Left cardiac atrium (tissue), 4 donors: ENCODE measurements at regions of chr11 and their contacts with region 1.

Region 1: GRCh38 chr11:75582895-75583717 is 21.1 kb downstream of the SERPINH1 start:
- DNase-seq: peak; percentile 80
- ATAC-seq: peak; percentile 74 to 81

Region 2: DNA sequence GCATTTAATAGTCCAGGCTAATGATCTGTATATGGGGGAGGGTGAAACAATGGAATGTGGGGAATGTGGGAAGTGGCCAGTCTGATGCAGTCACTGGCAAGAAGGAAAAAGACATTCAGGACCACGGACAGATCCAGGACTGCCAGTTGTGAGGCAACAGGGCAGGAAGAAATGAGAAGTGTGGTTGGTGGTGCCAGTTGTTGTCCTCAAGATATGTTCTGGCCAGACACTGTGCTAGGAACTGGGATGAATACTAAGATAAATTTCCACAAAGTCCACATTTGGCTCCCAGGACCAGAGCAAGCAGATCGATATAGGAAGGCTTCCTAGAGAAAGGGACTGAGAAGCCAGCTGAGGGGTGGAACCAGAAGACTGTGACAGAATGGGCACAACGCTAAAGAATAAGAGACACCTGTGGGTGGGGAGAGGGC is 349.3 kb before region 1 on chr11:
- intact Hi-C with region 1: no loop called
- DNase-seq: no peak
- ATAC-seq: peak in 1 of 2 donors; percentile 53

Region 3: GRCh38 chr11:75562048-75562835 is 20.9 kb before region 1 on chr11 and contains the start of gene SERPINH1:
- intact Hi-C with region 1: loop called in 1 of 2 experiments (anchors 1 kb)
- DNase-seq: peak; percentile 91
- ATAC-seq: peak; percentile 76 to 79
- total RNA-seq, gene SERPINH1: 105 to 137 TPM

Region 4: DNA sequence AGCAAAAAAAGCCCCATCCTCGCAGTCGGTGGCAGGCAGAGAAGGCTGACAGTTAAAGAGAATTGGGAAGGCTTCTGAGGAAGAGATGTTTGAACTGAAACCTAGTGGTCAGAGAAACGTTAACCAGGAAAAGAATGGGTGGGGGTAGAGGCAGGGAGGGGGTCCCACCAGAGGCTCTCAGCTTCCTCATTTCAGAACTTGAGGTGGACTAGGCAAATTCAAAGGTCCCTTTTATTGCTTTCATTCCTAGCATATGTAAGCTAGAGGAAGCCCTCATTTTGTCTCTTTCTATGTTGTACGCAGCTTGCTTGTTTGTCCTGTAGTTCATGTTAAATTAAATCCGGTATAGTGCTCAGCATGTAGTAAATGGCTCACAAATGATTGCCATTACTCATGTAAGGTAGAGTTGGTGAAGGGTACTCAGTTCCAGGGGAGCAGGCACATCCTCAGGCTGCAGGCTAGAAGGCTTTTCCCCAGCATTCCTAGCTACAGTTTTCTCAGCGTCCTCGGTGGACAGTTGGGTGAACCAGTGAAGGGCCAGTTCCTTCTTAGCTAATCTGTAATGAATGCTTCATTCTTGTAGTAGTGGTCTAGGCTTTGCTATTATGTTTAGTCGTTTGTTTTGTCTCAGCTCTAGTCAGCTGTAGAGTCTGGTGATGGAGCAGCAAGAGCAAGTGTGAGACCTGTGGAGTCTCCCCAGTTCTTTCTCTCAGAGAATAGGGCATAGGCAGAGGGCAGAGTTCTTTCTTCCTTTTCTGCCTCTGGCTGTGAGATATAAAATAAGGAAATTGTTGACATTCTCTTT is 290.5 kb after region 1 on chr11:
- intact Hi-C with region 1: no loop called
- DNase-seq: no peak
- ATAC-seq: peak in 1 of 2 donors; percentile 8